Activated CD8-positive, alpha-beta T cell treated with anti-CD3 and anti-CD28 coated beads, Interleukin-2, amount 10 ng/mL, durations not matched to agents 7 days and 5 days (primary cell): ENCODE measurements at regions of chr5 and their contacts with region 1.

Region 1: GRCh38 chr5:126676195-126676624 is 75.5 kb downstream of the PHAX start:
- DNase-seq: peak; percentile 81
- ATAC-seq: peak; percentile 77
- H3K4me3 Mint-ChIP-seq: no peak overlapping the region
- H3K27ac Mint-ChIP-seq: peak overlapping the region; percentile 47
- H3K4me1 Mint-ChIP-seq: peaks cover 23% of the 10 kb centered on the region
- H3K27me3 Mint-ChIP-seq: no peaks in the 10 kb centered on the region

Region 2: GRCh38 chr5:126686451-126687126 is 10.4 kb after region 1 on chr5:
- CTCF ChIA-PET with region 1: interaction called, 22 read pairs
- POLR2A ChIA-PET with region 1: no interaction called
- DNase-seq: no peak
- ATAC-seq: no peak
- H3K4me3 Mint-ChIP-seq: no peak overlapping the region
- H3K27ac Mint-ChIP-seq: no peak overlapping the region
- H3K4me1 Mint-ChIP-seq: peaks cover 21% of the 10 kb centered on the region
- H3K27me3 Mint-ChIP-seq: no peaks in the 10 kb centered on the region

Region 3: DNA sequence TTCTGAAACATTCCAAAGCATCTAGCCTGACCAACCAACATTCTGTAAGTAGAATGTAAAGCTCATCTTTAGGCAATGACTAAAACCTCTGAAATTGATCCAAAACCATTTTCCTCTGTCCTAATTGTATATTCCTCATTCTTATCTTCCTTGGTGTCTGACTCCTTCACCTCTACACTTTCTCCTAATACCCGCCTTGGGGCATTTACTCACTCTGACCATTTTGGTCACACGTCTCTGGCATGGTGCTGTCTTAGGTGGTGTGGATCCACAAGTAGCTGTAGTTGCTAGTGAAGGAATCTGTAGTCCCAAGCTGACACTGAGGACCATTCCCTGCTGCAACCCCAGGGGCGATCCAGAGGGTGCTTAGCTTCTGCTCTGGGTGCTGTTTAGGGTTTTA is 59.9 kb after region 1 on chr5:
- CTCF ChIA-PET with region 1: interaction called, 10 read pairs
- POLR2A ChIA-PET with region 1: no interaction called
- DNase-seq: no peak
- ATAC-seq: no peak
- H3K4me3 Mint-ChIP-seq: no peak overlapping the region
- H3K27ac Mint-ChIP-seq: no peak overlapping the region
- H3K4me1 Mint-ChIP-seq: peaks cover 3% of the 10 kb centered on the region
- H3K27me3 Mint-ChIP-seq: peaks cover 2% of the 10 kb centered on the region

Region 4: GRCh38 chr5:126801992-126802294 is 125.7 kb after region 1 on chr5:
- CTCF ChIA-PET with region 1: interaction called, 17 read pairs
- POLR2A ChIA-PET with region 1: no interaction called
- DNase-seq: no peak
- ATAC-seq: no peak
- H3K4me3 Mint-ChIP-seq: no peak overlapping the region
- H3K27ac Mint-ChIP-seq: no peak overlapping the region
- H3K4me1 Mint-ChIP-seq: peaks cover 40% of the 10 kb centered on the region
- H3K27me3 Mint-ChIP-seq: no peaks in the 10 kb centered on the region

Region 5: GRCh38 chr5:126884269-126884819 is 208.1 kb after region 1 on chr5:
- CTCF ChIA-PET with region 1: no interaction called
- POLR2A ChIA-PET with region 1: no interaction called
- DNase-seq: no peak
- ATAC-seq: no peak
- H3K4me3 Mint-ChIP-seq: no peak overlapping the region
- H3K27ac Mint-ChIP-seq: no peak overlapping the region
- H3K4me1 Mint-ChIP-seq: no peaks in the 10 kb centered on the region
- H3K27me3 Mint-ChIP-seq: no peaks in the 10 kb centered on the region